ENCODE measurements at regions of chr11 and their contacts with region 1.

Region 1: GRCh38 chr11:2532704-2533586 is 88.1 kb downstream of the KCNQ1 start:
- DNase-seq: peak; percentile 89
- CTCF ChIP-seq: peak; percentile 97

Region 2: DNA sequence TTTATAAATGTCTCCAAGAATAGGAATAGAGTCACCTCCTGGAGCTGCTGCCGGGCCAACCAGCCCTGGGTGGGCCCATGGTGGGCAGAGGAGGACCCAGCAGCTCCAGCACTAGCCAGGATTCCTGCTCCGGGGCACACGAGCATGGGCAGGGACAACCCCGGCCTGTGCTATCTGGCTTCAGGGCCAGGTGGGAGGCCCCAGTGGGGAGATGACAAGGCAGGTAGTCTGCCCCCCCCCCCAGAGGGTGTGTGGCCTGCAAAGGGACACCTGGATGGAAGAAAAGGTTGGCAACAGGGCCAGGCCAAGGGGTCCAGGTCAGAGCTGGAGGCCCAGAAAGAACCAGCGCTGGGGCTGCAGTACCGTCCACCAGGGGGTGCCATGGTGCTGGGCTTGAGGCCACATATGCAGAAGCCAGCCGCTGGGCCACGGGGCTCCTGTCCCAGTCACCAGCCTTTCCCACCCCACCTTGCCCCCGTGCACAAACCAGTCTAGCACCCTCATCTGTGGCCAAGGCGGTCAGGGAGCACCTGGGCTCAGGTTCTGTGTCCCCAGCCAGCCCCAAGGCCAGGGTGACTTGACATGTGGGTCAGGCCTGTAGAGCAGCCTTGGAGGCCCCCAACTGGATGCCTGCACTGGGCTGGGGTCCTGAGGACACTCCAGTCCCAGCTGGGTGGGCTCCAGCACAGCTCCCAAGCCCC is 227.7 kb before region 1 on chr11:
- CTCF ChIA-PET with region 1: interaction called, 46 read pairs
- POLR2A ChIA-PET with region 1: no interaction called
- DNase-seq: peak; percentile 83
- CTCF ChIP-seq: peak; percentile 90

Region 3: GRCh38 chr11:2428322-2428795 is 104.6 kb before region 1 on chr11:
- CTCF ChIA-PET with region 1: interaction called, 204 read pairs
- POLR2A ChIA-PET with region 1: no interaction called
- DNase-seq: peak; percentile 77
- CTCF ChIP-seq: peak; percentile 92

Region 4: DNA sequence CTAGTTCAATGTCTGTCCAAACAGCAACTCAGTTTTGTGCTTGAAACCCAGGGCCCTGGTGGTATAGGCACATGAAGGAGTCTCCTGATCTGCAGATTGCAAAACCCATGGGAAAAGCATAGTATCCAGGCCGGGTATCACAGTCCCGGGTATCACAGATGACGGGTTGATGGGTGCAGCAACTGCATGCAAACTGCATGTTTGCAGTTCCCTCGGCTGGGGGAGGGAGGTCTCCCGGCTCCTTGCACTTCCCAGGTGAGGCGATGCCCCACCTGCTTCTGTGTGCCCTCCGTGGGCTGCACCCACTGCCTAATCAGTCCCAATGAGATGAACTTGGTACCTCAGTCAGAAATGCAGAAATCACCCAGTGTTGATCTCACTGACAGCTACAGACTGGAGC is 34.2 kb before region 1 on chr11:
- CTCF ChIA-PET with region 1: no interaction called
- POLR2A ChIA-PET with region 1: no interaction called
- DNase-seq: no peak
- CTCF ChIP-seq: no peak

Region 5: DNA sequence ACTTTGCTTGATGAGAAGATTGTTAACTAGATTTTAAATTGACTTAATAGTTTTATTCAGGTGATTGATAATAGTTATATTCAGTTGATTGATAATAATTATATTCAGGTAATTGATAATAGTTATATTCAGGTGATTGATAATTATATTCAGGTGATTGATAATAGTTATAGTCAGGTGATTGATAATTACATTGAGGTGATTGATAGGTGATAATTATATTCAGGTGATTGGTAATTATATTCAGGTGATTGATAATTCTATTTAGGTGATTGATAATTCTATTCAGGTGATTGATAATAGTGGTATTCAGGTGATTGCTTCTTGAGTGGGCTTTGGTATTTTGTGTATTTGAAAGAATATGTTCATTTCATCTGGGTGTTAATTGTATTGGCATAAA is 12.5 kb after region 1 on chr11:
- CTCF ChIA-PET with region 1: interaction called, 12 read pairs
- POLR2A ChIA-PET with region 1: no interaction called
- DNase-seq: no peak
- CTCF ChIP-seq: no peak

Region 6: GRCh38 chr11:2901854-2902783 is 369.2 kb after region 1 on chr11:
- CTCF ChIA-PET with region 1: interaction called, 13 read pairs
- POLR2A ChIA-PET with region 1: no interaction called
- DNase-seq: peak; percentile 99
- CTCF ChIP-seq: no peak

Region 7: GRCh38 chr11:2945031-2945756 is 412.2 kb after region 1 on chr11:
- CTCF ChIA-PET with region 1: interaction called, 10 read pairs
- POLR2A ChIA-PET with region 1: no interaction called
- DNase-seq: peak; percentile 18
- CTCF ChIP-seq: no peak